SK-N-SH (cell line): ENCODE measurements at regions of chr2 and their contacts with region 1.

Region 1: DNA sequence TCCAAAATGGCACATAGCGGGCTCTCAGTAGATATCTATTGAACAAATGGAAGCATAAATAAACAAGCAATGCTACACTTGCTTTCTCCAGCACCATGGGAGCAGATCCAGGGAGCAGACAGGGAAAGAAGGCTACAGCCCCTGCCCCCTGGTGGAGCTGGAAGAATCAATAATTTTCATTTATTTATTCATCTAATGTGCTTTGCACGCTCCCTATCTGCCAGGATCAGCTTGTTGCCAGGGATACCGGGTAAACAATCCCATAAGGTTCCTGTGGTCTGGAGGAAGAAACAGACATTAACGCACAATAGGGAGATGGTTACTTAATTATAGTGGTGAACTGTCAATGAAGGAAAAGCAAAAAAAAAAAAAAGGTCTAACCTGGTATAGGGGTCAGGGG is 40.1 kb upstream of the CLASP1 start:
- DNase-seq: peak; percentile 87
- H3K4me3 ChIP-seq: no peak overlapping the region
- H3K27ac ChIP-seq: peak overlapping the region in 1 of 2 experiments; percentile 30; a peak in 1 of 4 replicates
- H3K4me1 ChIP-seq: peaks cover 0 to 6% of the 10 kb centered on the region in 2 experiments; a peak in 1 of 4 replicates
- H3K27me3 ChIP-seq: no peaks in the 10 kb centered on the region
- CTCF ChIP-seq: peak; percentile 54
- EP300 ChIP-seq: peak in 1 of 2 experiments; percentile 48; a peak in 1 of 4 replicates
- RAD21 ChIP-seq: peak; percentile 74

Region 2: GRCh38 chr2:121596221-121597080 is 92.9 kb before region 1 on chr2:
- CTCF ChIA-PET with region 1: interaction called, 17 read pairs
- POLR2A ChIA-PET with region 1: no interaction called
- DNase-seq: peak; percentile 50
- H3K4me3 ChIP-seq: no peak overlapping the region; a peak in 1 of 4 replicates
- H3K27ac ChIP-seq: peak overlapping the region; percentile 33 to 80
- H3K4me1 ChIP-seq: peaks cover 5 to 18% of the 10 kb centered on the region in 2 experiments; a peak in 3 of 4 replicates
- H3K27me3 ChIP-seq: no peaks in the 10 kb centered on the region
- CTCF ChIP-seq: peak; percentile 61
- EP300 ChIP-seq: no peak
- RAD21 ChIP-seq: peak; percentile 71

Region 3: DNA sequence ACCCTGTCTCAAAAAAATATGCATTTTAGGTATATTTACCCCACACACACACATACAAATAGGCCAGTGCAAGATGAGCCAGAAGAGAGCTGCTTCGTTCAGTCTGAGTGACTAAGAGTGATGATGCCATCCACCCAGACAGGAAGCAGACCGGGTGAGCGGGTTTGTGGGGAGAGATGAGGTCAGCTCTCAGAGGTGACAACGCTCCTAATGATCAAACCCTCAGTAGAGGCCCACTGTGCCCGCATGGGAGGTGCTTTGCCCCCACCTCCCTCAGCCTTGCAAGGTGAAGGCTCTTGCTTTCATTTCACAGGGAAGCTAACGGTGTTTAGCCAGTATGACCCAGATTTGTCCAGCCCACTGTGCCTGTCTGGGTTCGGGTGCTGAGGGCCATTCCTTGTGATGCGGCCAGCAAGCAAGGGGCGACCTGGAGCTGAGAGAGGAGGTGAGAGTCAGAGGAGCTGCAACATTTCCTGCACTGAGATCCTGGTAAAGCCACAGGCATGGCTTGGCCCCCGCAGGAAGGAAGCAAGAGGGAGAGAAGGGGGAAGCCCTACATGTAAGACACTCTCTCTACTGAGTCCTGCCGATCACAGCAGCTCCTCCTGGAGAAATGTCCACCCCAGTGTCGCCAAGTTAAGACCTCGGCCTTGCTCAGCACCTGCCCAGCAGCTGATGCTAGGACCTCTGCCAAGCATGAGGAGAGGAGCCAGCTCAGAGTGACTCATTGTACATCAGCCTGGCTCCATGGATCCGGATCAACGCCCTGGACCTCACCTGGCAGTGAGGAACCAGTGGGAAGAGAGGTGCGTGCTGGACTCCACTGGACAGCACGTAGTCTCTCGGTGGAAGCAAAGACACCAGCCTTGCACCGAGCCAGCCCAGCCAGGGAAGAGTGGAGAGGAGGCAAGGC is 10.3 kb after region 1 on chr2:
- CTCF ChIA-PET with region 1: interaction called, 12 read pairs
- POLR2A ChIA-PET with region 1: no interaction called
- DNase-seq: no peak
- H3K4me3 ChIP-seq: no peak overlapping the region
- H3K27ac ChIP-seq: peak overlapping the region in 1 of 2 experiments; percentile 31; a peak in 1 of 4 replicates
- H3K4me1 ChIP-seq: peaks cover 3 to 14% of the 10 kb centered on the region in 2 experiments; a peak in 3 of 4 replicates
- H3K27me3 ChIP-seq: no peaks in the 10 kb centered on the region
- CTCF ChIP-seq: no peak
- EP300 ChIP-seq: peak in 1 of 2 experiments; percentile 6; a peak in 1 of 4 replicates
- RAD21 ChIP-seq: no peak